Endothelial cell of umbilical vein (primary cell): ENCODE measurements at regions of chr11 and their contacts with region 1.

Region 1: DNA sequence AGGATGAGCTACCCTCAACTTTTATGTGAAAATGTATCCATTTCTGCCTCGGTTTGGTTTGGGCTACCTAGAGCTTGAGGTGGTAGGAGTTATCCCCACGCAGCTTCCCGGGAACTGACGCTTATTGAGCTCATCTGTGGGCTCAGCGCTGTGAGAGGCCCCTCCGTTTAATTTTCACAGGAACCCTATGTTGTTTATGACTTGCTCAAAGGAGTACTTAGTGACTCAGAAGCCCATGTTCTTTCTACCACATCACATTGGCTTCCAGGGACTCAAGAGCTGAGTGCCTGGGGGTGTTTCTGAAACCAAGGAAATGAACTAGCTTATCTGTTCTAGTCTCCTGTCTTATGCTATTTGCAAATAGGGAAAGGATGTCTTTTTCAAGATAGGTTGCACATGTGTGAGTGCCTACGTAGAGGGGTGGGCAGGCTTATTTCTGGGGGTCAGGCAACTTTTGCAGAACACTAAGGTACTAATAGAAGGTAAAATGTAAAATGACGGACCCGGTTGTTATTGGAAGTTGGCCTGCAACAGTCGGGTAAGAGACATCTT is 40.5 kb downstream of the MICAL2 start:
- DNase-seq: no peak
- H3K4me3 ChIP-seq: no peak overlapping the region
- H3K27ac ChIP-seq: no peak overlapping the region
- H3K4me1 ChIP-seq: no peaks in the 10 kb centered on the region
- H3K27me3 ChIP-seq: no peaks in the 10 kb centered on the region
- CTCF ChIP-seq: no peak
- POLR2A ChIP-seq: no peak

Region 2: GRCh38 chr11:12137938-12138731 is 12.8 kb before region 1 on chr11:
- CTCF ChIA-PET with region 1: interaction called, 4 read pairs
- POLR2A ChIA-PET with region 1: no interaction called
- dilution Hi-C with region 1: no loop called
- intact Hi-C with region 1: loop called (anchors 1 kb)
- DNase-seq: peak; percentile 82
- H3K4me3 ChIP-seq: no peak overlapping the region
- H3K27ac ChIP-seq: peak overlapping the region; percentile 61
- H3K4me1 ChIP-seq: peaks cover 19% of the 10 kb centered on the region
- H3K27me3 ChIP-seq: no peaks in the 10 kb centered on the region
- CTCF ChIP-seq: no peak
- POLR2A ChIP-seq: no peak

Region 3: GRCh38 chr11:12182676-12183541 is 32.0 kb after region 1 on chr11:
- CTCF ChIA-PET with region 1: no interaction called
- POLR2A ChIA-PET with region 1: no interaction called
- dilution Hi-C with region 1: no loop called
- intact Hi-C with region 1: no loop called
- DNase-seq: peak; percentile 89
- H3K4me3 ChIP-seq: no peak overlapping the region
- H3K27ac ChIP-seq: peak overlapping the region; percentile 99
- H3K4me1 ChIP-seq: peaks cover 54% of the 10 kb centered on the region
- H3K27me3 ChIP-seq: no peaks in the 10 kb centered on the region
- CTCF ChIP-seq: no peak
- POLR2A ChIP-seq: no peak

Region 4: DNA sequence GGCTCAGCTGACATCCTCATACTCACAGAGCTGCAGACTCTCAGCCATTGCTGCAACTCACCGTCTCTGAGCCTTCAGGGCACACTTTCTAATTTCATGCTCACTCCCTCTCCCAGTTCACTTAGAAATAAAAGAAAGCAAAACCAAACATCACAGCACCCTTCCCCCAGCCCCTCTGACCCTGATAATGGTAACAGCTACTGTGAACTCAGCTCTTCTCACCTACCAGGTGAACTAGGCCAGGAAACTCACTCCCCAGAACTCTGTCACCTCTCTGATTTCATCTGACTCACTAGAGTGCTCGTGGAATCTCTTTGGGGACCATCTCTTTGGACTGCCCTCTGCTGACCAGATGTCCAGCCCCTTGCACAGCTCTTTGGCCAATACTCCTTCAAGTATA is 211.9 kb after region 1 on chr11:
- CTCF ChIA-PET with region 1: no interaction called
- POLR2A ChIA-PET with region 1: no interaction called
- dilution Hi-C with region 1: no loop called
- intact Hi-C with region 1: no loop called
- DNase-seq: no peak
- H3K4me3 ChIP-seq: no peak overlapping the region
- H3K27ac ChIP-seq: no peak overlapping the region
- H3K4me1 ChIP-seq: peaks cover 2% of the 10 kb centered on the region
- H3K27me3 ChIP-seq: peaks cover 14 to 23% of the 10 kb centered on the region in 2 experiments
- CTCF ChIP-seq: no peak
- POLR2A ChIP-seq: no peak